Left cardiac atrium (tissue), 4 donors: ENCODE measurements at regions of chr20 and their contacts with region 1.

Region 1: DNA sequence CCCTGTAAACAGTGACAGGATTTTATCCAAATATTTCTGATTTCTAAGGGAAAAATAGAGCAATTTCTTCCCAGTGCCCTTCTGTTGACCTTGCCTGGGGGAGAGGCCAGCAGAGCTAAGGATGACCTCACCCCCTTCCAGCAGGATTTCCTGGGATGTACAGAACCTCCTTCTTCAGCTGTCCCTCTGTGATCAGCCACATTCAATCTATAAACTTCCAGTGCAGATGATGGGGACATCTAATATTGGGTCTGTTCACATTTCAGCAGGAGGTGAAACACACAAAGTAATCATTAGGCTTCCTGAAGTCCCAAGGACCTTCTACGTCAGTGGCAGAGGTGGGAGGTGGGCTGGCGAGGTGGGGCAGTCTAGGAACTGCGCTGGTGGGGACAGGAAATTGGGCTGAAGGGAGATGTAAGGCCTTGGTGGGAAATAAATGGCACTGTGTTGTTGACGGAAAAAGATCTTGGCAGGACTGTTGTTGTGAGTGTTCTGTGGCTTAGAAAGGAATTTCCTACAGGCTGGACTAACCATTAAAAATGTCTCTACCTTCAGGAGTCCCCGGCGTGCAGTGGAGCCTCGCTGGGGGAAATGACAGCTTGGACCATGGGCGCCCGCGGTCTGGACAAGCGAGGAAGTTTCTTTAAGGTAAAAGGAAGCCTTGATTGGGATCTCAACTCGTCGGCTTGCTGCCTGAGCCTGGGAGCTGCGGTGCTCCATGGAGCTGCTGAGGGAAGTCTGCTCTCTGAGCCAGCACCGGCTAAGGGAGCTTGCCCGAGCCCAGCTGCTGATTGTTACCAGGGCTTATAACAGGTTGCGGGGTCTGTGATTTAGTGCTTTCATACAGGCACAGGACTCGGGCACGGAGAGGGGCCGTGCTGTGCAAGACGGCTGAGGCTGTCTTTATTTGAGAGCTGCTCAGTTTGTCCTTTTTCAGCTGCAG is 127.9 kb upstream of the NAA20 start:
- DNase-seq: peak; percentile 73
- ATAC-seq: peak; percentile 68 to 75

Region 2: DNA sequence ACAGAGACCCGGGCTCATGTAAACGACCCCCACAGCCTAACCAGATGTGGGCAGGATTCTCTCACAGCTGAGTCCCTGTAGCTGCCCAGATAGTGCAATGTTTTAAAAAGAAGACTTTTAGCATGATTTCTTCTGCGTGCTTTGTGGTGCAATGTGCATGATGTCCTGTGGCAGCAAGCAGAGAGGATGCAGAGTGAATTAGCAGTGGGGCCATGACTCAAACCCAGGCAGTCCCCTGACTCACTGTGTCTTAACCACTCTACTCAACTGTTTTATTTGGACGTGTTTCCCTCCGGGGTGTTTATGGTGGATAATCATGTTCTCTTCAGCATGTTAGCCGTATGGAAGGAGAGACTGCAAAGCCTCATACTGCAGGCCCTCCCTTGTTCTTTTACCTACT is 428.9 kb before region 1 on chr20:
- intact Hi-C with region 1: no loop called
- DNase-seq: no peak
- ATAC-seq: peak in 1 of 2 donors; percentile 63

Region 3: GRCh38 chr20:19828232-19828631 is 61.0 kb before region 1 on chr20:
- intact Hi-C with region 1: loop called in 1 of 2 experiments (anchors 10 kb)
- DNase-seq: no peak
- ATAC-seq: peak; percentile 82 to 89

Region 4: GRCh38 chr20:19995220-19995863 is 106.1 kb after region 1 on chr20:
- intact Hi-C with region 1: loop called in 1 of 2 experiments (anchors 5 kb)
- DNase-seq: no peak
- ATAC-seq: peak; percentile 19 to 32